MCF 10A (cell line): ENCODE measurements at regions of chr15 and their contacts with region 1.

Region 1: DNA sequence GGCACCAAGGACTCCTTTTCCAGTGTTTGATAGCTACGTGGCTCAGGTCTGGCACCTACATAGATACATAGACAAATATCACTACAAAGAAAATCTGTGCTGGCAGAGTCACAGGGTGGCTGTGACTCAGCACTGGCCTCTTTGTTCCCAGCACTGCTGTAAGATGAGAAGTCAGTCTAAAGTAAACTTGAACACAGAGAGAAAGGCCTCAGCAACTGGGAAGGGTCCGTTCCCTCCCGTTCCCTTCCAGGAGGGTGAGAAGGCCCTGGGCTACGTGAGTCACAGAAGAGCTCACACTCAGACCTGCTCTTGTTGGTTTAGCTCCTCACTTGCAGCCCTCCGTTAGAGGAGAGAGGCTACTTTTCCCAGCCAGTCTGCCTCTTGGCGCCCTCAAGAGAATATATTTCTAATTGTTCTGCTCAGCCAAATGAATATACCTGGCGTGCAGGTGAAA is 23.1 kb downstream of the ANXA2 start:
- DNase-seq: peak; percentile 99
- H3K4me3 Mint-ChIP-seq: peak overlapping the region; percentile 64
- H3K27ac Mint-ChIP-seq: peak overlapping the region; percentile 92
- H3K4me1 Mint-ChIP-seq: peaks cover 67% of the 10 kb centered on the region
- H3K27me3 Mint-ChIP-seq: no peaks in the 10 kb centered on the region
- CTCF ChIP-seq: no peak

Region 2: DNA sequence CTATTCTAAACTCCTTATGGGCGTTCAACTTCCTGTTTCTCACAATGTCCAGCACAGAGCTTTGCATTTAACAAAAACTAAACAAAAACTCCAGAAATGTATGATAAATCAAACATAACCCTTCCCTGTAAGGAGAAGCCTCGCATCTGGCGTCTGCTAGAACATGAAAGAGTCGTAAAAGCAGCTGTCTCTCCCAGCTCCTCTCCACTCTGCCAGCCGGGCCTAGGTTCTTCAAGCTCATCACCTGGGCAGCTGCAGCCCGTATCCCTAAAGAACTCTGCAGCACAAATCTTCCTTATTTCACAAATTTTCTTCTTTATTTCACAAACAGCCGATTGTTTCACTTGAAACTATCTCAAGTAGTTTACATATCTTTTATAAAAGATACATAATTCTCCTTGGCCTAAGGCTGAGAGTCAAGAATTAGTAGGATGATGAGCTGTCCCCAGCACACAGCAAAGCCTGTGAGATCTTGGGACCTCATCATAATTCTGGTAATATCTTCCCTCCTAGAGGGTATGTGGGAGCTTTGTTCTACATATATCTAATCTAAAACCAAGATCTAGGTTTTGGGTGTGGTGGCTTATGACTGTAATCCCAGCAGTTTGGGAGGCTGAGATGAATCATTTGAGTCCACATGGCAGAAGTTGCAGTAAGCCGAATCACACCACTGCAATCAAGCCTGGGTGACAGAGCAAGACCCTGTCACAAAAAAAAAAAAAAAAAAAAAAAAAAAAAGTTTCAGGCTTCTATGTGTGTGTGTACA is 12.2 kb before region 1 on chr15:
- CTCF ChIA-PET with region 1: interaction called, 38 read pairs
- POLR2A ChIA-PET with region 1: interaction called, 154 read pairs
- intact Hi-C with region 1: no loop called
- DNase-seq: peak; percentile 74
- H3K4me3 Mint-ChIP-seq: peak overlapping the region; percentile 5
- H3K27ac Mint-ChIP-seq: peak overlapping the region; percentile 93
- H3K4me1 Mint-ChIP-seq: peaks cover 41% of the 10 kb centered on the region
- H3K27me3 Mint-ChIP-seq: no peaks in the 10 kb centered on the region
- CTCF ChIP-seq: no peak

Region 3: GRCh38 chr15:60397772-60398445 is 23.3 kb after region 1 on chr15 and contains the start of gene ANXA2:
- CTCF ChIA-PET with region 1: interaction called, 7 read pairs
- POLR2A ChIA-PET with region 1: interaction called, 461 read pairs
- intact Hi-C with region 1: loop called (anchors 1 kb)
- DNase-seq: peak; percentile 90
- H3K4me3 Mint-ChIP-seq: peak within 1 kb of the TSS; percentile 98
- H3K27ac Mint-ChIP-seq: peak within 1 kb of the TSS; percentile 91
- H3K4me1 Mint-ChIP-seq: peaks cover 55% of the 10 kb centered on the region
- H3K27me3 Mint-ChIP-seq: no peaks in the 10 kb centered on the region
- CTCF ChIP-seq: no peak
- total RNA-seq, gene ANXA2: 3,317 and 3,451 TPM in 2 replicates

Region 4: DNA sequence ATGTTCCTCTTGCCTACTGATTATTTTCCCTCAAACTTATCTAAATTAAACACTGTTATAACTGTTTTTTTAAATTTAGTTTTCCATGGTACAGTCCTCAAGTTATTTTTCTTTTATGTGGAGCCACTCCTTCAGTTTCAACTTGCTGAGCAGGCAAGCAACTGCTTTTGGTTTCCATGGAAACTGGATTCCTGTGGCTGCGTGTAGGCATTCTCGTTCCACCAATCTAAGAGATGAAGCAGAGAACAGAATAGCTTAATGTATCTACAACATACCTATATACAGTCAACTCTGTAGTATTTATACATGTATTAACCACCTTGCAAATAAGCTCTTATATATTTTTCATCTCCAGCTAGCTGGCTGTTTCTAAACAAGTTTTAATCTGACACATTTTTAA is 48.9 kb after region 1 on chr15:
- CTCF ChIA-PET with region 1: interaction called, 4 read pairs
- POLR2A ChIA-PET with region 1: interaction called, 90 read pairs
- intact Hi-C with region 1: no loop called
- DNase-seq: peak; percentile 66
- H3K4me3 Mint-ChIP-seq: peak overlapping the region; percentile 50
- H3K27ac Mint-ChIP-seq: peak overlapping the region; percentile 92
- H3K4me1 Mint-ChIP-seq: peaks cover 35% of the 10 kb centered on the region
- H3K27me3 Mint-ChIP-seq: no peaks in the 10 kb centered on the region
- CTCF ChIP-seq: no peak

Region 5: DNA sequence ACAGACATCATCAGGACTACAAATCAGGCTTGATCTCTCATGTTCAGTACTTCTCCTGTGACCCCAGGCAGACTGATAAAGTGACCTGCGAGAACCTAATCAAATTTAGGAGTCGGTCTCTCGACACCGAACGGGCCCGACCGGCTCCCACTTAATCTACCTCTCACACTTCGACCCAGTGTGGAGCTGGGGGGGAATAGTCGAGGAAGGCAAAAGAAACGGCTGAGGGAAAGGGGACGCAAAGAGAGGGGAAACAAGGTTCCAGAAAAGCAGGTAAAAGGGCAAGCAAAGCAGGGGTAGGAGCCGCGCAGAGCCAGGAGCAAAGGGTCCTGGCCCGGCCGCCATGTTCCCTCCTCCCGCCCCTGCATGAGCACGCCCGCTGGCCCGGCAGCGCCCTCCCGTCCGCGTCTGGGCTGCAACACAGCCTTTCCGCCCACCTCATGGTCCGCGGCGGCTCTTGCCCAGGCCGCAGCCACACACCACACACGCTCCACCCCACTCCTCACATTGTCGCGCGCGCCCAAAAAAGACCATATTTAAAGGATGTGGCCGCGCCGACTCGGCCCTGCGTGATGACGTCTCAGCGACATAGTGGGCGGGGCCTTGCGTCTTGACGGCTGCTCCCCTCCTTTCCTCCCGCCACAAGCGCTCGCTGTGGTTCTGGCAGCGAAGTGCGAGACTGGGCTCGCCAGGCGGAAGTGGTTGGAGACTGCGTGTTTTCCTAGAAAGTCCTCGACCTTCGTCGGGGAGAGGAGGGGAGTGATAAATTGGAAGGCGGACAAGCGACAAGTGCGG is 104.1 kb after region 1 on chr15 and contains the start of gene ICE2:
- CTCF ChIA-PET with region 1: no interaction called
- POLR2A ChIA-PET with region 1: interaction called, 11 read pairs
- intact Hi-C with region 1: no loop called
- DNase-seq: peak; percentile 93
- H3K4me3 Mint-ChIP-seq: peak within 1 kb of the TSS; percentile 90
- H3K27ac Mint-ChIP-seq: peak within 1 kb of the TSS; percentile 96
- H3K4me1 Mint-ChIP-seq: peaks cover 32% of the 10 kb centered on the region
- H3K27me3 Mint-ChIP-seq: no peaks in the 10 kb centered on the region
- CTCF ChIP-seq: no peak
- total RNA-seq, gene ICE2: 55.1 and 57.9 TPM in 2 replicates